Natural killer cell (primary cell): ENCODE measurements at regions of chr7 and their contacts with region 1.

Region 1: DNA sequence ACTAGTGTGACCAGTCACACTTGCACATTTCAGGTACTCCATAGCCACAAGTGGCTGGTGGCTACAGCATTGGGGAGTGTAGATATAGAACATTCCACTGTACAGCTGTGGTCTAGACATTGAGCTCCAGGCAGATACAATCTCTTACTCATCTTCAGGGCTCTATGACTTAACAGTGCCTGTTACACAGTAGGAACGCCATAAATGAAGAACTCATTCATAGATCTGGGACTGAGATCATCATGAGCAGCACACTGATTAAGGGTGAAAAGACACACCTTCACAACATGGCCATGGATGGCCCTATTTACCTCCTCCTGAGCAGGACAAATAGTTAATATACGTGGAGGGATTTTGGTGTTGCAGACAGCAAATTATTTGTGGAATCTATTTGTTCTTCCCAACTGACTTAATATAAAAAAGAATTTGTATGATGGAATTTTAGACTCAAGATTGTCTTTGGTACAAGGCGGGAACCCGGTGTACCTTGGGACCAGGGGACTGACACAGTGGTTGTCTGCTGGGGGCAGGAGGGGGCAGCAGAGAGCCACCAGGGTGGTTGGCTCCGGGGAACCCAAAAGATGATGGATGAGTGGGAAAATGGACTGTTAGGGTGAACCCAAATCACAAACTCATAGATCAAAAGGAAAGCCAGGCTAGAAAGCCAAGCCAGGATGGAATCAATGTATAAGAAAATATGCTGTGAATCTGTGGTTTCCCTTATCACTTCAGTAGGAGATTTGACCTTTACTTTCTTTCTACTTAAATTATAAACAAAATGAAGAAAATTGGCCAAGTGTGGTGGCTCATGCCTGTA is 24.3 kb upstream of the CPA2 start:
- DNase-seq: peak; percentile 35 to 72
- ATAC-seq: peak; percentile 53 to 71 (median 64)
- H3K4me3 ChIP-seq: no peak overlapping the region
- H3K4me3 Mint-ChIP-seq: no peak overlapping the region
- H3K27ac ChIP-seq: no peak overlapping the region
- H3K27ac Mint-ChIP-seq: no peak overlapping the region
- H3K4me1 ChIP-seq: no peaks in the 10 kb centered on the region
- H3K4me1 Mint-ChIP-seq: peaks cover 0 to 5% of the 10 kb centered on the region in 2 donors
- H3K27me3 ChIP-seq: peaks cover 2% of the 10 kb centered on the region
- H3K27me3 Mint-ChIP-seq: peaks cover 12 to 26% of the 10 kb centered on the region in 2 donors
- CTCF ChIP-seq: peak; percentile 70

Region 2: DNA sequence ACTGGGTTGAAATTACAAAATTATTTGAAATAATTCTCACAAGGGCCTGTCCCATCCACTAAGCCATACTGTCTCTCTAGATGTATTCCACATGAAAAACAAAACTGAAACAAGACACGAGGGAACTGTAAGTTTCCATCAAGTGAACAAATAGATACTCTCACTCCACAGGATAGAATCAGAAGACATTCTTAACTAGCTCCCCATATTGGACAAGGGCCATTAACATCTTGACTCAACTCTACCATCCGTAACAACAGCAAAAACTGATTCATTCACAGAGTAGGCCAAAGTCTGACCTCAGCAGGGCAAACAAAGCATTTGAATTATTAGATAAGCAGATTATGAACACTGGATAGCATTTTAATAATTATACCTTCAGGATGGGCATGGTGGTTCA is 318.7 kb before region 1 on chr7:
- intact Hi-C with region 1: no loop called
- DNase-seq: no peak
- ATAC-seq: no peak
- H3K4me3 ChIP-seq: no peak overlapping the region
- H3K4me3 Mint-ChIP-seq: no peak overlapping the region
- H3K27ac ChIP-seq: no peak overlapping the region
- H3K27ac Mint-ChIP-seq: peak overlapping the region in 1 of 2 donors; percentile 51
- H3K4me1 ChIP-seq: no peaks in the 10 kb centered on the region
- H3K4me1 Mint-ChIP-seq: peaks cover 25% of the 10 kb centered on the region in 2 donors
- H3K27me3 ChIP-seq: no peaks in the 10 kb centered on the region
- H3K27me3 Mint-ChIP-seq: no peaks in the 10 kb centered on the region
- CTCF ChIP-seq: no peak

Region 3: GRCh38 chr7:130560970-130561369 is 318.6 kb after region 1 on chr7:
- intact Hi-C with region 1: loop called (anchors 5 kb)
- DNase-seq: peak in 1 of 2 donors; percentile 24
- ATAC-seq: peak in 1 of 3 donors; percentile 46
- H3K4me3 ChIP-seq: no peak overlapping the region
- H3K4me3 Mint-ChIP-seq: no peak overlapping the region
- H3K27ac ChIP-seq: no peak overlapping the region
- H3K27ac Mint-ChIP-seq: no peak overlapping the region
- H3K4me1 ChIP-seq: no peaks in the 10 kb centered on the region
- H3K4me1 Mint-ChIP-seq: no peaks in the 10 kb centered on the region
- H3K27me3 ChIP-seq: no peaks in the 10 kb centered on the region
- H3K27me3 Mint-ChIP-seq: no peaks in the 10 kb centered on the region
- CTCF ChIP-seq: no peak

Region 4: DNA sequence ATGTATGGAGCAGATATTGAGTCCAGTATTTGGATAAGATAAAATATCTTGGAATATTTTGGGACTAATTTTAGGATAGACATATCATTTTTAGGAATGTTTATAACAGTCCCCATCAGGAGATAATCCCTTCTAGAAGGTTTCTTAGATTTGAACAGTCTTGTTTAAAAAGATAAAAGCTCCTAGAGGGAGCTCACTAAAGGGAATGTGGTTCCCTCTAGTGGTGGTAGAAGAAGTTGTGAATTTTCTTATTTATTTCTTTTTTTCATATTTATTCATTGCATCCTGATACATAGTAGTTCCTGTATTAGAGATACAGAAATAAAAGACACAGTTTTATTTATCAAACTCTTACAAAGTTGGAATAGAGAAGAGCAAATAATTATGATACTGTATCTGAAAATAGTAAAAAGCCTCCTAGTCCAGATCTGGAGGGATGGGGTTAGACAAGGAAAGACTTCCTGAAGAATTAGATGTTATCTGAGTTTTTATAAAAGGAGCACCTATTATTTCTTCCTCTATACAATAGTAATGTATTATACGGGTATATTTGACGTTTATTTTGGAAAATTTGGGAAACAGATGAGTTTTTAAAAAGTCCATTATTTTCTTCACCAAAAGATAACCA is 516.1 kb after region 1 on chr7:
- intact Hi-C with region 1: loop called (anchors 1 kb)
- DNase-seq: peak in 1 of 2 donors; percentile 75
- ATAC-seq: peak in 2 of 3 donors; percentile 56 to 58
- H3K4me3 ChIP-seq: no peak overlapping the region
- H3K4me3 Mint-ChIP-seq: no peak overlapping the region
- H3K27ac ChIP-seq: no peak overlapping the region
- H3K27ac Mint-ChIP-seq: no peak overlapping the region
- H3K4me1 ChIP-seq: no peaks in the 10 kb centered on the region
- H3K4me1 Mint-ChIP-seq: no peaks in the 10 kb centered on the region
- H3K27me3 ChIP-seq: no peaks in the 10 kb centered on the region
- H3K27me3 Mint-ChIP-seq: peaks cover 12 to 22% of the 10 kb centered on the region in 2 donors
- CTCF ChIP-seq: peak; percentile 85

Region 5: DNA sequence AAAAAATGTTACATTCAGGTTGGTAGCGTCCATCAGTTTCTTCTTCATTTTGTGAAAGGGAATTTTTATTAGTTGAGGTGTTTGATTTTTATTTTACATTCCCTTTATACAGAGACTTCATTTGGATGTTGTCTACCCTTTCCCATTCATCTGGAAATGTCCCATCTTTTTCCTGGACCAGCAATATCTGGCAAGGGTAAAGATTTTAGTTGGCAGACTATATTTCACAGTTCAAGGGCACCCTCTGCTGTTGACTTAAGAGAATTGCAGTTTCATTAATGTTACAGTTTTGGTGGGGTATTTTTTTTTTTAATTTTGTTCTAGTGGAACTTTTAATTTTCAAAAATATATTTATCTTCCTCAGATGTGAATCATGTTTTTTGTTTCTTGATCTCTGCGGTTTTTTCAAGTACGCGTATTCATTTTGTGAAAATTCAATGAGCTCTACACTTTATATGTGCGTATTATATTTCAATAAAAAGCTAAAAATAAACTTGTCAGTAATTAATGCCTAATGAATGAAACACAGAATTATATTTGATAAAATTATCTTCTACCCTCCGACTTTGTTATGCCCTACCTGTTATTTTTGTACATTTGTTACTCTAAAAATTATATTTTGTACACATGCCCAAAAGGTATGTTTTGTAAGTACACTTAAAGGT is 589.5 kb after region 1 on chr7:
- intact Hi-C with region 1: loop called (anchors 2 kb)
- DNase-seq: peak in 1 of 2 donors; percentile 75
- ATAC-seq: peak in 2 of 3 donors; percentile 52 to 58
- H3K4me3 ChIP-seq: no peak overlapping the region
- H3K4me3 Mint-ChIP-seq: no peak overlapping the region
- H3K27ac ChIP-seq: no peak overlapping the region
- H3K27ac Mint-ChIP-seq: no peak overlapping the region
- H3K4me1 ChIP-seq: no peaks in the 10 kb centered on the region
- H3K4me1 Mint-ChIP-seq: no peaks in the 10 kb centered on the region
- H3K27me3 ChIP-seq: no peaks in the 10 kb centered on the region
- H3K27me3 Mint-ChIP-seq: peaks cover 12 to 16% of the 10 kb centered on the region in 2 donors
- CTCF ChIP-seq: peak; percentile 86